Activated CD4-positive, alpha-beta T cell treated with anti-CD3 and anti-CD28 coated beads for 36 hours (primary cell): ENCODE measurements at regions of chr14 and their contacts with region 1.

Region 1: GRCh38 chr14:71331403-71331802 is 424.1 kb downstream of the PCNX1 start:
- DNase-seq: no peak
- ATAC-seq: peak; percentile 17
- H3K4me3 Mint-ChIP-seq: no peak overlapping the region
- H3K27ac Mint-ChIP-seq: peak overlapping the region; percentile 69
- H3K4me1 Mint-ChIP-seq: peaks cover 70% of the 10 kb centered on the region
- H3K27me3 Mint-ChIP-seq: no peaks in the 10 kb centered on the region

Region 2: GRCh38 chr14:71221119-71221518 is 110.3 kb before region 1 on chr14:
- CTCF ChIA-PET with region 1: no interaction called
- POLR2A ChIA-PET with region 1: no interaction called
- intact Hi-C with region 1: loop called in 1 of 2 experiments (anchors 1 kb)
- DNase-seq: no peak
- ATAC-seq: no peak
- H3K4me3 Mint-ChIP-seq: no peak overlapping the region
- H3K27ac Mint-ChIP-seq: no peak overlapping the region
- H3K4me1 Mint-ChIP-seq: peaks cover 15% of the 10 kb centered on the region
- H3K27me3 Mint-ChIP-seq: no peaks in the 10 kb centered on the region

Region 3: GRCh38 chr14:71267007-71267513 is 64.3 kb before region 1 on chr14:
- CTCF ChIA-PET with region 1: no interaction called
- POLR2A ChIA-PET with region 1: no interaction called
- intact Hi-C with region 1: loop called in 1 of 2 experiments (anchors 1 kb)
- DNase-seq: peak; percentile 26
- ATAC-seq: peak; percentile 88
- H3K4me3 Mint-ChIP-seq: no peak overlapping the region
- H3K27ac Mint-ChIP-seq: no peak overlapping the region
- H3K4me1 Mint-ChIP-seq: peaks cover 19% of the 10 kb centered on the region
- H3K27me3 Mint-ChIP-seq: no peaks in the 10 kb centered on the region

Region 4: DNA sequence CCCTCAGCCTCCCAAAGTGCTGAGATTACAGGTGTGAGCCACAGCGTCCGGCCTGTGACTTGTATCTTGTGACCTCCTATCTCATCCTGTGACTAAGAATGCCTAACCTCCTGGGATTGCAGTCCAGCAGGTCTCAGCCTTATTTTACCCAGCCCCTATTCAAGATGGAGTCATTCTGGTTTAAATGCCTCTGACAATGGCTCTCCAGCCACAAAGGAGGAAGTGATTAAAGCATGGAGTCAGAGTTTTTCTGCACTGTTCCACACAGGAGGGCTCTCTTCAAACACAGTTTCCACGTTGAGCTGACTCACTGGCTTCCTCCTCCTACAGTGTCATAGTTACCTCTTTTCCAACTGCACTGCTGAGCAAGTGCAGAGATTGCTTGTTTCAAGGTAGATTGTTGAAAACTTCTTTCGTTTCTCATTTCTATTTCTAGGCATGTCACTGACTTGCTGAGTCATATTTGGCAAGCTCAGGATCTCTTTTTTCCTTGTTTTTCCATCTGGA is 40.4 kb before region 1 on chr14:
- CTCF ChIA-PET with region 1: no interaction called
- POLR2A ChIA-PET with region 1: interaction called, 6 read pairs
- intact Hi-C with region 1: loop called in 1 of 2 experiments (anchors 1 kb)
- DNase-seq: peak; percentile 72
- ATAC-seq: peak; percentile 100
- H3K4me3 Mint-ChIP-seq: no peak overlapping the region
- H3K27ac Mint-ChIP-seq: peak overlapping the region; percentile 45
- H3K4me1 Mint-ChIP-seq: peaks cover 18% of the 10 kb centered on the region
- H3K27me3 Mint-ChIP-seq: peaks cover 2% of the 10 kb centered on the region

Region 5: DNA sequence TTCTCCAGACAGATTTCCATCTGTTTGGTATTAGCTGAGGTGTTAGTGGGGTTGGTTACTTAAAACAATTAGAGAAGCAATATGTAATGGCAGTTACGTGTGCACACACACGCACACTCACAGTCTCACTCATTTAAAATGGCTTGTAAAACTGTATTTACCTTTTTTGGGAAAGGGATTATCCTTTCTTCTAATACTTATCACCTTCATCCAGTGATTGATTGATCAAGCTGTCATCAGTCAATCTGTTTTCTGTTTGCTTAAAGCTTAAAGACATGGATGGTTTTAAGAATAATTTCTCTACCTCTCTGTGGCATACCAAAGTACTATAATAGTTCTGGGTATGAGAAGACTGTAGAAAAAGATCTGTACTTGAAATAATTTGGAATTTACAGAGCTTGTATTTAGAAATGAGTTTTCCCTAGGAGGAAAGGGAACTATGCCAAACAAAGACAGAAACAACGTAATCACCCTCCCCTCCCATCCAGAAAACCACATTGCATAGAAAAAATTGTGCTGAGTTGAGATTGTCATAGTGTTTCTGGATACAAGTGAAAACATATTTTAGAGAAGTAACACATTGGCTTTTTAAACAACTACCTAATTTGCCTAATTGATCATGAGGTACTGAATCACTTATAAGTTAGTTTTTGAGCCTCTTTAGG is 31.6 kb after region 1 on chr14:
- CTCF ChIA-PET with region 1: interaction called, 4 read pairs
- POLR2A ChIA-PET with region 1: interaction called, 4 read pairs
- intact Hi-C with region 1: loop called in 1 of 2 experiments (anchors 2 kb)
- DNase-seq: no peak
- ATAC-seq: no peak
- H3K4me3 Mint-ChIP-seq: no peak overlapping the region
- H3K27ac Mint-ChIP-seq: no peak overlapping the region
- H3K4me1 Mint-ChIP-seq: peaks cover 62% of the 10 kb centered on the region
- H3K27me3 Mint-ChIP-seq: no peaks in the 10 kb centered on the region

Region 6: DNA sequence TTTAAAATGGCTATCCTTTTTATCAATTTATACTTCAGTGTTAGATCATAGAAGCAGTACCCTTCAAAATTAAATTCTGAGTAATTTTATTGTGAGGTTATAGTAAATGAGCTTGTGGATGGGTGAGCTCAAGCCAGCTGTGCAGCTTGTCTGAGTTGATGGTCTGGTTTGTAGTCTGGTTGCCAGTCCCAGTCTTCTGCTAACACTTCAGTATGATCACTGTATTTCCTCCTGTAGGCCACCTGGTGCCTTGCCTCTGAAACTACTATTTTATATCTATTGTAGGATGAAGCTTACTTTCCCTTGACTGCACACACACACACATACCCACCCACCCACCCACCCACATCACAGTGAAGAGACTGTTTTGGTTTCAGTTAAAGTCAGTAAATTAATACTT is 72.3 kb after region 1 on chr14:
- CTCF ChIA-PET with region 1: interaction called, 3 read pairs
- POLR2A ChIA-PET with region 1: no interaction called
- intact Hi-C with region 1: loop called in 1 of 2 experiments (anchors 2 kb)
- DNase-seq: peak; percentile 43
- ATAC-seq: peak; percentile 78
- H3K4me3 Mint-ChIP-seq: no peak overlapping the region
- H3K27ac Mint-ChIP-seq: no peak overlapping the region
- H3K4me1 Mint-ChIP-seq: peaks cover 34% of the 10 kb centered on the region
- H3K27me3 Mint-ChIP-seq: no peaks in the 10 kb centered on the region

Region 7: GRCh38 chr14:72926292-72927028 is 1595.1 kb after region 1 on chr14 and contains the start of gene DCAF4:
- CTCF ChIA-PET with region 1: no interaction called
- POLR2A ChIA-PET with region 1: no interaction called
- intact Hi-C with region 1: loop called in 1 of 2 experiments (anchors 5 kb)
- DNase-seq: peak; percentile 96
- ATAC-seq: peak; percentile 99
- H3K4me3 Mint-ChIP-seq: peak within 1 kb of the TSS; percentile 89
- H3K27ac Mint-ChIP-seq: peak within 1 kb of the TSS; percentile 87
- H3K4me1 Mint-ChIP-seq: peaks cover 11% of the 10 kb centered on the region
- H3K27me3 Mint-ChIP-seq: no peaks in the 10 kb centered on the region
- total RNA-seq, gene DCAF4: 16.0 to 21.7 TPM